ENCODE measurements at regions of chr1 and their contacts with region 1.

Region 1: DNA sequence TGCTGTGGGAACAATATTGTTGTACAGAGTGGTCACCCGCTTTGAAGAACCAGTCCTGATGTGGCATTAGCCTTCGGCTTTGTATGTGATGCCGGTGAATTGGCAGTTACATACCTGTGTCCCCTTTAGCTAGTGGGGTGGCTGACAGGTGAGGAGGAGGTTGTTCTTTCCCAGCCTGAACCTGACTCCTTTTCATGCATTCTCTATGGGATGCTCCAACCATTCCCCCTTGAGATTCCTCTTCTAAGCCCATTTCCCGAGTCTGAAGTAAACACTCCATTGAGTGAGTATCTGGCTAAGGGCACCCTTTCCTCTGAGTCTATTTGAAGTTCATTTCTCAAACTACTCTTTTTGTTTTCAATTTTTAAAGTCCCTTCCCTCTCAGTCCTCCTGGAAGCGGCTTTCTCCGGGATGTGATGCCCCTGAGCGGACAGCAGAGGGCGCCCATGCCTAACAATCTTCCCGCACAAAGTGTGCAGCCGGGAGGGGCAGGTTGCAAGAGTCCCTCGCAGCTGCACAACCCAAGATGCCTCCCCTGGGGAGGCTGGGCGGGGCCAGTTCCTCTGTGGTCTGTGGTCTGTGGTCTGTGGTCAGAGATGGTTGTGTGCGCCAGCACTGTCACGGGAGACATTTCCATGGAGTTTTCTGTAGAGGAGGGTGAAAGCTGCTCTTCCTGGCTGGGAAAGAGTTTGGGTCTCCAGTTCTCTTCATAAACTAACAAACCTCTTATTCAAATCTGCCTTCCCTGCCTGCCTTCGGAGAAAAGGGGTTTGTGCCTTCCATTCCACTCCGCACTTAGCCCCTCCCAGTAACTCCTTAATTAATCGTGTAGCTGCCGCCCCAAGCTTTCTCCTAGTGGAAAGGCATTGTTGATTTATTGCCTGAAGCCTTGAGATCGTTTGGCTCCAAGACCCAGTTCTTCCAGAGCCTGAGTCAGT is 36.4 kb upstream of the LMX1A start:
- DNase-seq: peak; percentile 85
- CTCF ChIP-seq: peak; percentile 94

Region 2: GRCh38 chr1:165903672-165904071 is 510.8 kb after region 1 on chr1:
- in situ Hi-C with region 1: loop called (anchors 10 kb)
- DNase-seq: no peak
- CTCF ChIP-seq: no peak